ENCODE measurements at regions of chr2 and their contacts with region 1.

Region 1: DNA sequence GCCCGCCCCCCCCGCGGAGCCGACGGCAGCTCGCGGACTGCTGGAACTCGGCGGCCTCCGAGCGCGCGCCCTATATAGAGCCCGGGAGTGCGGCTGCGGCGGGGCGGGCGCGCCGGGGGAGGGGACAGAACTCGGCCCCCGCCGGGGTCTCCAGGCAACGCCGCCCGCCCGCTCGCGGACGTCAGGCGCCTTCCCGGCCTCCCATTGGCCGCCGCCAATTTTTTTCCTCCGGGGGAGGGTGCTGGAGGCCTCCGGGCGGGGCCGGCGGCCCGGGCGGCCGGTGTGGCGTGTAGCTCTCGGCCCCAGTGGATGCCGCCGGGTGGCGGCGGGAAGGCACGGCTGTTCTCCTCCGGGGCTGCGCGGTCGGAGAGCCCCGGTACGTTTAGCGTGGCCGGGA is at the start of gene ZFP36L2:
- DNase-seq: peak; percentile 95 to 99 (median 96)
- ATAC-seq: peak; percentile 79
- H3K4me3 ChIP-seq: peak within 1 kb of the TSS; percentile 62
- H3K27ac ChIP-seq: peak within 1 kb of the TSS; percentile 97
- H3K4me1 ChIP-seq: peaks cover 12 to 47% of the 10 kb centered on the region in 2 experiments; a peak in 4 of 5 replicates
- H3K27me3 ChIP-seq: no peaks in the 10 kb centered on the region
- CTCF ChIP-seq: peak in 1 of 3 experiments; percentile 15; a peak in 1 of 6 replicates
- EP300 ChIP-seq: no peak
- POLR2A ChIP-seq: peak; percentile 95
- RAD21 ChIP-seq: no peak
- polyA plus RNA-seq, gene ZFP36L2: 32.4 to 42.8 TPM

Region 2: DNA sequence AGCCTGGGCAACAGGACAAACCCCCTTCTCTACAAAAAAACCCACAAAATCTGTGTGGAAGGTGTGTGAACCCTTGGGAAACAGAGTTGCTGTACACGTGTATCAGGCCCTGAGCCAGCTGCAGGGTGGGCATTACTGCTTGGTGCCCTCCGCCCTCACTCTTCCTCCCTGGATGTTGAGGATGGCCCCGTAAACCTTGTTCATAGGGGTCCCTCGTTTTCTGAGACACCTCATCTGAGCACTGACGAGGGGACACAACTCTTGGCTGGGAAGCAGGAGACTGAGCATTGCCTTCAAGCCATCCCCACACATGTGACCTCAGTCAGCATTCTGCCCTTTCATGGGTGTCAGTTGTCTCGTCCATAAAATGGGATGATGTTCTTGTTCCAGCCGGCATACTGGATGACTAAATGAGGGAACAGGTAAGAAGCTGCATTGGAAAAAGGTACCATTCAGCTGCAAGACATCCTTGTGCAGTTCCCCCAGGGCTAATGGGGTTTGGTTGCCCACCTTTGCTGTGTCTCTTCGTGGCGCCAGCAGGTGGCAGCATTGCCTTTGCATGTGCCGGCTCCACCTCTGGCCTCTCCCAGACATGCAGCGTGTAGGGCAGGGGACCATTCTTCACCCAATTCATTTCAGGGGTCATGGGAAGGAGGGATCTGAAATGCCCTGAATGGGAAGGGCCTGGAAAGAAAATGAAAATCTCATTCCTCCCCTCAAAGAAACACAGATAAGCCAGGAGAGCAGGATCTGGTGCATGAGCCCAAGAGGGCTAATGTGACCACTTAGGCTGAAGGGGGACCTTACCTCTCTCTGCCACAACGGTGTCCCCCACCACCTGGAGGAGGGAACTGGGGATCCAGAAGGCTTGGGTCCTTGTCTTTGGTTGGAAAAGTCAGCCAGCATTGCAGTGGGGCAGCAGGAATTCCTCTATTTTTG is 397.8 kb before region 1 on chr2:
- CTCF ChIA-PET with region 1: interaction called, 40 read pairs
- POLR2A ChIA-PET with region 1: interaction called, 3 read pairs
- in situ Hi-C with region 1: loop called (anchors 5 kb)
- intact Hi-C with region 1: loop called (anchors 2 kb)
- DNase-seq: peak; percentile 78 to 88 (median 82)
- ATAC-seq: peak; percentile 96
- H3K4me3 ChIP-seq: no peak overlapping the region
- H3K27ac ChIP-seq: no peak overlapping the region
- H3K4me1 ChIP-seq: peaks cover 3 to 9% of the 10 kb centered on the region in 2 experiments; a peak in 2 of 5 replicates
- H3K27me3 ChIP-seq: no peaks in the 10 kb centered on the region; a peak in 1 of 5 replicates
- CTCF ChIP-seq: peak; percentile 89 to 97 (median 95)
- EP300 ChIP-seq: no peak
- POLR2A ChIP-seq: no peak
- RAD21 ChIP-seq: peak; percentile 81 to 94

Region 3: GRCh38 chr2:42944779-42945415 is 281.7 kb before region 1 on chr2:
- CTCF ChIA-PET with region 1: interaction called, 41 read pairs
- POLR2A ChIA-PET with region 1: interaction called, 5 read pairs
- in situ Hi-C with region 1: no loop called
- intact Hi-C with region 1: loop called (anchors 1 kb)
- DNase-seq: peak in 2 of 4 experiments; percentile 44 to 47
- ATAC-seq: peak; percentile 76
- H3K4me3 ChIP-seq: no peak overlapping the region
- H3K27ac ChIP-seq: no peak overlapping the region
- H3K4me1 ChIP-seq: peaks cover 2 to 18% of the 10 kb centered on the region in 2 experiments; a peak in 4 of 5 replicates
- H3K27me3 ChIP-seq: no peaks in the 10 kb centered on the region
- CTCF ChIP-seq: no peak
- EP300 ChIP-seq: no peak
- POLR2A ChIP-seq: no peak
- RAD21 ChIP-seq: no peak

Region 4: DNA sequence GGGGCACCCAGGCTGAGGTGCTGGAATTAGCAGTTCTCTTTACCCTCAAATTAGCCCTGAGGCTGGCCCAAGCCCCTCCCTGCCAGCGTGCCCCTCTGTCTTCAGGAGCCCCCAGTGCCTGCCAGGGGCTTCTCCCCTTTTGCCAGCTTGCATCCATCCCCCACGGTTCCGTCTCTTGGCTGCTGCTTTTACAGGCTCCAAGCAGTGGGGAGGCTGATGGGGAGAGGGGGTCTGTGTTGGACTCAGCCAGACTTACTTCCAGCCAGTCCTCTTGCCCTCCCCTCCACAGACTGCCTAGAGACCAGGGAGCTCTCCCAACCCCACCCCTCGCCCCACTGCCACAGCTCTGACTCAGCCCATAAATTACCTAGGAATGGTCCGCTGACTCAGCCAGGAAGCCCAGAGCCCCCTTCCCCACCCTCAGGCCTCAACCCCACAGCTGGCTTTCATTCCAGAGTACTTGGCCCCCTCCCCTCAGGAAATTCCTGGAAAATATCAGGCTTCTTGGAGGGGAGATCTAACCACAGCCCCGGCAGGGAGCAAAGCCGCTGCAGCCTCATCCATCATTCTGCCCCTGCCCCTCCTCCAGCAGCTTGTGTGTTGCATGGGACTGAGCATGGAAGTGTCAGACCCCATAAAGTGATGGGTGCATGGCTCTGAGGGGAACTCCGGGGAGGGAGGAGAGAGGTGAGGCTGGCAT is 184.7 kb before region 1 on chr2:
- CTCF ChIA-PET with region 1: no interaction called
- POLR2A ChIA-PET with region 1: interaction called, 7 read pairs
- in situ Hi-C with region 1: no loop called
- intact Hi-C with region 1: loop called (anchors 5 kb)
- DNase-seq: peak; percentile 73 to 91 (median 83)
- ATAC-seq: peak; percentile 81
- H3K4me3 ChIP-seq: no peak overlapping the region
- H3K27ac ChIP-seq: peak overlapping the region; percentile 62; the same call in 2 of the 3 replicates
- H3K4me1 ChIP-seq: peaks cover 56 to 59% of the 10 kb centered on the region in 2 experiments
- H3K27me3 ChIP-seq: no peaks in the 10 kb centered on the region
- CTCF ChIP-seq: no peak
- EP300 ChIP-seq: peak; percentile 76
- POLR2A ChIP-seq: no peak
- RAD21 ChIP-seq: peak in 1 of 2 experiments; percentile 8; a peak in 1 of 4 replicates

Region 5: DNA sequence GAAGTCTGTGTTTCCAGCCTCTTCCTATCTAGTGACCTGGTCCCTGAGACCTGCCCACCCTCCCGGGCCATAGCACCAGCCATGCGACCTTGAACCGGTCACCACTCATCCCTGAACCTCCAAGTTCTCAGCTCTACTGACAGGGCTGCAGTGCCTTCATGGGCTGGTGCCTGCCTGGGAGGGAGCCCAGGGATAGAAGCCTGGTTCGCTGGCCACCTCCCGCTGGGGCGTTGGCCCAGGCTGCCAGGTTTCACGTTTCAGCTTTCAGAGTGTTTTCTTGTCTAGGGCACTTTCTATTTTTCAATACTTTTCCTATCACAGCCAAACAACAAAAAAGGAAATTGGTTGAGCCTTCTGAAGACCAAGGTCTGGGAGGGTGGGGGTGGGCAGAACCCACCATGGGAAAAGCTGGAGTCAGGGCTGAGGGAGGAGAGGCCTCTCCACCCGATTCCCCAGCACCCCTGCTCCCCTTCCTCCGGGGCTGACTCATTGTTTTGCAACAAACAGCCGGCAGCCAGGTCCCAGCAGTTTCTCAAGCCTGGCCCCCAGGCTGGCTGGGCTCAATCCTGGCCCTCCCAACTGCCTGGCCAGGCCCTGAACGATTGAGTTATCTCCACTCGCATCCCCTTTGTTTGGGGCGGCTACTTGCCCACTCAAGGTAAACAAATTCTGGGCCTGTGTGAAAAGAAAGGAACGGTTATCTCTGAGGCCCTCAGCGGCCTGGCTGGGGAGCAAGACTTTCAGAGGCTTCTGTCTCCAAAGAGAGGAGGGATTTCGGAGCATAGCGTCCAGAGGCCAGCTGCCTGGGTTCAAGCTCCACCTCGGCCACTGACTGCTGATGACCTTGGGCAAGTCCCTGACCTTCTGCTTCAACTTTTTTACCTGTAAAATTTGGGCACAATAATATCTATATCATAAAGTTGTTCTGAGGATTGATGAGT is 47.7 kb before region 1 on chr2:
- CTCF ChIA-PET with region 1: no interaction called
- POLR2A ChIA-PET with region 1: interaction called, 8 read pairs
- in situ Hi-C with region 1: loop called (anchors 10 kb)
- intact Hi-C with region 1: loop called (anchors 2 kb)
- DNase-seq: peak; percentile 81 to 97 (median 86)
- ATAC-seq: peak; percentile 86
- H3K4me3 ChIP-seq: peak overlapping the region; percentile 1; the same call in 1 of the 2 replicates
- H3K27ac ChIP-seq: peak overlapping the region; percentile 94
- H3K4me1 ChIP-seq: peaks cover 59 to 71% of the 10 kb centered on the region in 2 experiments
- H3K27me3 ChIP-seq: no peaks in the 10 kb centered on the region
- CTCF ChIP-seq: no peak
- EP300 ChIP-seq: peak; percentile 93
- POLR2A ChIP-seq: peak; percentile 56
- RAD21 ChIP-seq: peak; percentile 38 to 40

Region 6: GRCh38 chr2:43370705-43371104 is 144.1 kb after region 1 on chr2:
- CTCF ChIA-PET with region 1: no interaction called
- POLR2A ChIA-PET with region 1: no interaction called
- in situ Hi-C with region 1: no loop called
- intact Hi-C with region 1: no loop called
- DNase-seq: no peak
- ATAC-seq: no peak
- H3K4me3 ChIP-seq: no peak overlapping the region
- H3K27ac ChIP-seq: no peak overlapping the region
- H3K4me1 ChIP-seq: no peaks in the 10 kb centered on the region
- H3K27me3 ChIP-seq: no peaks in the 10 kb centered on the region
- CTCF ChIP-seq: no peak
- EP300 ChIP-seq: no peak
- POLR2A ChIP-seq: no peak
- RAD21 ChIP-seq: no peak

Region 7: GRCh38 chr2:43542285-43542937 is 315.9 kb after region 1 on chr2:
- CTCF ChIA-PET with region 1: interaction called, 11 read pairs
- POLR2A ChIA-PET with region 1: interaction called, 3 read pairs
- in situ Hi-C with region 1: no loop called
- intact Hi-C with region 1: loop called (anchors 5 kb)
- DNase-seq: peak; percentile 20 to 38 (median 32)
- ATAC-seq: peak; percentile 70
- H3K4me3 ChIP-seq: no peak overlapping the region
- H3K27ac ChIP-seq: no peak overlapping the region
- H3K4me1 ChIP-seq: peaks cover 0 to 4% of the 10 kb centered on the region in 2 experiments; a peak in 1 of 5 replicates
- H3K27me3 ChIP-seq: no peaks in the 10 kb centered on the region
- CTCF ChIP-seq: peak in 2 of 3 experiments; percentile 36 to 72; a peak in 4 of 6 replicates
- EP300 ChIP-seq: no peak
- POLR2A ChIP-seq: no peak
- RAD21 ChIP-seq: peak; percentile 61 to 74

Measured in K562 (cell line).